MCF 10A (cell line): ENCODE measurements at regions of chr20 and their contacts with region 1.

Region 1: GRCh38 chr20:22691369-22692118 is 107.2 kb upstream of the FOXA2 start:
- DNase-seq: peak; percentile 74
- H3K4me3 Mint-ChIP-seq: no peak overlapping the region
- H3K27ac Mint-ChIP-seq: no peak overlapping the region
- H3K4me1 Mint-ChIP-seq: peaks cover 13% of the 10 kb centered on the region
- H3K27me3 Mint-ChIP-seq: no peaks in the 10 kb centered on the region
- CTCF ChIP-seq: peak; percentile 94

Region 2: DNA sequence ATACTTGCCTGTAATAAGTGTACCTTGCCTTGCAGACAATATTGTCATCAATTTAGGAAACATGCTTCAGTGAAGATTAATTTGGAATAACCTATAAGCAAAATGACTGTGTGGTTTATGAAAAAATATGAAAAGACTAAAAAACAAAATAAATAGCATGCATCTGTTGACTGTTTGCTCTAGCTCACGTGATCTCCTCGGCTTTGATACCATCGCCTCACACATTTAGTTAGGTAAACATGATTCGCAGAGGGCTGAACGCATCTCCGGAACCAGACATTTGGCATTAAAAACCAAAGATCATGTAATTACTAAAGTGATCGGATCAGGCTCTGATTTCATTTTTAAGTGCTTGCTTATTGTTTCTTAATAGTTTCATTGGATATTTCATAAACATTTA is 58.2 kb before region 1 on chr20:
- CTCF ChIA-PET with region 1: no interaction called
- POLR2A ChIA-PET with region 1: no interaction called
- intact Hi-C with region 1: no loop called
- DNase-seq: no peak
- H3K4me3 Mint-ChIP-seq: no peak overlapping the region
- H3K27ac Mint-ChIP-seq: no peak overlapping the region
- H3K4me1 Mint-ChIP-seq: no peaks in the 10 kb centered on the region
- H3K27me3 Mint-ChIP-seq: peaks cover 10% of the 10 kb centered on the region
- CTCF ChIP-seq: no peak

Region 3: DNA sequence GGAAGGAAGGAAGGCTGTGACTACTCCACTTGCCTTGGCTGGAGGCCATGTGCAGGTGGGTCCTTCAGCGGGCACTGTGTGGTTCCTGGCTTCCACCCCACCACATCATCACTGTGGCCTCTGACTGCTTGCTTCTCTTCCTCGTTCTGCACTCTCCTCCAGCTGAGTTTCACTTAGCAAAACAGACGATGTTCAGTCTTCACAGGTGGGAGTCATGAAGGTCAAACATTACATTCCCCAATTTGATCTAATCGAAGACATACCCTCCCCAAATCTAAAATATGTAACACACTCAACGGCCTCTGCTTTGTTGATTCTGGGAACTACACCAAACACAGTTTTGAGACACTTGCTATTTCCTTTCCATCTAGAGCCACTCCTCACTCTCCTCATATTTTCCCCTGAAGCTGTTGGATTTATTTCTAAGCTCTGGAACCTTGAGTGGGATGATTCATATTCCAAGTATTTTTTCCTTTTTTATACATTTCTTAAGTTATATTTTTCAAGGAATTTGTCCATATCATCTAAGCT is 25.3 kb after region 1 on chr20:
- CTCF ChIA-PET with region 1: interaction called, 182 read pairs
- POLR2A ChIA-PET with region 1: interaction called, 5 read pairs
- intact Hi-C with region 1: no loop called
- DNase-seq: no peak
- H3K4me3 Mint-ChIP-seq: no peak overlapping the region
- H3K27ac Mint-ChIP-seq: peak overlapping the region; percentile 10
- H3K4me1 Mint-ChIP-seq: peaks cover 16% of the 10 kb centered on the region
- H3K27me3 Mint-ChIP-seq: no peaks in the 10 kb centered on the region
- CTCF ChIP-seq: no peak

Region 4: DNA sequence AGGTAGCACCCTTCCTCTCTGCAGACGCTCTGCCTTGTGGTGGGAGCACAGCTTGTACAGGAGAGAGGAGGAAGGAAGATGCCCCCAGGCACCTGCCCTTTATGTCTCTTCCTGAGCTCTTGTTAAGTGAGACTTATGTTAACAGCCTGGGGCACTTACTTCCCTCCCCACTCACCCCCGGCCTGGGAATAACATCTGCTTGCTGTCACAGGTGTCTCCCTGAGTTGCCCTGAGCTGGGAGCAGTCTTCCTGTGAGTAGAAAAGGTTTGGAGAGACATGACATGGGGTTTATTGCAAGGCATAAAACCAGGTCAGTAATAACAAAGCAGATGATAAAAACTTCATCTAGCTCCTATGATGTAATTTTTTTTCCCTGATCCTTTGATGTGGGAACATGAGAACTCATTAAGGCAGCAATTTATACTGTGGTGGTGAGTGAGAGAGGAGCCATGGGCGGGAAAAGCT is 345.5 kb after region 1 on chr20:
- CTCF ChIA-PET with region 1: interaction called, 10 read pairs
- POLR2A ChIA-PET with region 1: no interaction called
- intact Hi-C with region 1: no loop called
- DNase-seq: no peak
- H3K4me3 Mint-ChIP-seq: no peak overlapping the region
- H3K27ac Mint-ChIP-seq: no peak overlapping the region
- H3K4me1 Mint-ChIP-seq: peaks cover 14% of the 10 kb centered on the region
- H3K27me3 Mint-ChIP-seq: no peaks in the 10 kb centered on the region
- CTCF ChIP-seq: no peak

Region 5: GRCh38 chr20:23099791-23100698 is 408.5 kb after region 1 on chr20:
- CTCF ChIA-PET with region 1: interaction called, 21 read pairs
- POLR2A ChIA-PET with region 1: no interaction called
- intact Hi-C with region 1: no loop called
- DNase-seq: peak; percentile 81
- H3K4me3 Mint-ChIP-seq: peak overlapping the region; percentile 12
- H3K27ac Mint-ChIP-seq: no peak overlapping the region
- H3K4me1 Mint-ChIP-seq: peaks cover 49% of the 10 kb centered on the region
- H3K27me3 Mint-ChIP-seq: no peaks in the 10 kb centered on the region
- CTCF ChIP-seq: no peak

Region 6: GRCh38 chr20:23235173-23236027 is 543.9 kb after region 1 on chr20:
- CTCF ChIA-PET with region 1: interaction called, 167 read pairs
- POLR2A ChIA-PET with region 1: no interaction called
- intact Hi-C with region 1: loop called (anchors 1 kb)
- DNase-seq: peak; percentile 71
- H3K4me3 Mint-ChIP-seq: no peak overlapping the region
- H3K27ac Mint-ChIP-seq: no peak overlapping the region
- H3K4me1 Mint-ChIP-seq: peaks cover 16% of the 10 kb centered on the region
- H3K27me3 Mint-ChIP-seq: no peaks in the 10 kb centered on the region
- CTCF ChIP-seq: peak; percentile 73

Region 7: DNA sequence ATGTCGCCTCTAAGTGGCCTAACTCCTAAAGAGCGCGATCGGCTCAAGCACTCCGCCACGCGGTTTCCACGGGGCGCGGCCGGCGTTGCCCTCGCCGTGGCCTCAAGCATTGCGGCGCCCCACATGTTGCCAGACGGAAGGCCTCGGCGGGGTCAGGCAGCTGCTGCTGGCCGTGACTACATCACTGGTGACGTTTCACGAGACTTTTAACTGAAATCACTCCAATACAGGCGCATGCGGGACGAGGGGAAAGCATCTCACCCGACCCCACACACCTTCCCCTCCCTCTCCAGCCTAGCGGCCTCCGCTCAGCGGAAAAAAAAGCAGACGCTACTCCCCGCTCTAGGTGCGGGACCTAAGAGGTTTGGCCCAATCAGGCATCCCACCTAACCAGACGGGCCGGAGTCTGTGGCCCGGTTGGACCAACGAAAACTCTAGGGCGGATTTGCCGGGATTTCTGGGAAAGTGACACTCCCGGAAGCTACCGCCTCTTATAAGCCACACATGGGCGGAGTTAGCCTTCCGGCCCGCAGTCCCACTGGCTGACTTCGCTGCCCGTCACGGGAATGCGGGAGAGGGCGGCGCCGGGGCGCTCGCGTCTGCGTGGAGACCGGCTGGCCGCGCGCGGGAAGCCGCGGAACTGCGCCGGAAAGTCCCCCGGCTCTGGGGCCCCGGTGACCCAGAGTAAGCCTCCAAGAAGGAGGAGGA is 658.8 kb after region 1 on chr20 and contains the start of gene NXT1:
- CTCF ChIA-PET with region 1: interaction called, 233 read pairs
- POLR2A ChIA-PET with region 1: interaction called, 28 read pairs
- intact Hi-C with region 1: no loop called
- DNase-seq: peak; percentile 99
- H3K4me3 Mint-ChIP-seq: peak within 1 kb of the TSS; percentile 87
- H3K27ac Mint-ChIP-seq: peak within 1 kb of the TSS; percentile 97
- H3K4me1 Mint-ChIP-seq: peaks cover 17% of the 10 kb centered on the region
- H3K27me3 Mint-ChIP-seq: no peaks in the 10 kb centered on the region
- CTCF ChIP-seq: no peak
- total RNA-seq, gene NXT1: 32.2 and 40.1 TPM in 2 replicates